HEK293 (cell line): ENCODE measurements at regions of chr17 and their contacts with region 1.

Region 1: DNA sequence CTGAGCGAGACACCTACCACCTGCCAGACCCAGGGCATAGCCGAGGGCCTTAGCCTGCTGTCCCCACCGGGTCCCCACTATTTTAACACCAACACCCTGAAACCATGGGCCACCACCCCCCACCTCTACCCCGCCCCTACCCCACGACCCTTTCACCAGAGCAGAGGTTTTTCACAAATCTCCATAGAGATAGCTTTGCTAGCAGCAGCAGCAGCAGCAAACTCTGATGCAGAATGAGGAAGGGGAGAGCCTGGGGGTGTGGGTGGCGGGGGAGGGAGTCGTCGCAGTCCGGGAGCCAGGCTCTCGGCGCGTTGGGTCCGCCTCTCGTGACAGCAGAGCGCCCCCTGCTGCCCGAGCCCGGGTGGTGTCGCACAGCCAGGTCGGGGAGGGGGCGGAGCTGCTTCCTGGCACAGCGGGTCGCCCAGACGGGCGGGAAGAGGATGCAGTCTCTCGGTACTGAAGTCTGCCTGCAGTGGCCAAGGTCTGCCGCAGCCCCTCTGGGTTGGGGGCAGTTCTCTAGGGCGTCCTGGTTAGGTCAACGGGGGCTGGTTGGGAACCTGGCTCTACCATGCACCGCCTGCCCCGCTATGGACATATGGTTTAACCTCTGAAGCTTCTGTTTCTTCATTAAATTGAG is 38.1 kb upstream of the CCDC182 start:
- H3K4me3 ChIP-seq: no peak overlapping the region
- H3K27ac ChIP-seq: no peak overlapping the region; the same call in 1 of the 2 replicates
- H3K4me1 ChIP-seq: peaks cover 3% of the 10 kb centered on the region; the same call in 1 of the 2 replicates
- CTCF ChIP-seq: peak; percentile 94

Region 2: GRCh38 chr17:57671667-57672632 is 111.3 kb before region 1 on chr17:
- CTCF ChIA-PET with region 1: interaction called, 18 read pairs
- POLR2A ChIA-PET with region 1: no interaction called
- H3K4me3 ChIP-seq: no peak overlapping the region
- H3K27ac ChIP-seq: no peak overlapping the region
- H3K4me1 ChIP-seq: peaks cover 8% of the 10 kb centered on the region
- CTCF ChIP-seq: peak; percentile 82

Region 3: DNA sequence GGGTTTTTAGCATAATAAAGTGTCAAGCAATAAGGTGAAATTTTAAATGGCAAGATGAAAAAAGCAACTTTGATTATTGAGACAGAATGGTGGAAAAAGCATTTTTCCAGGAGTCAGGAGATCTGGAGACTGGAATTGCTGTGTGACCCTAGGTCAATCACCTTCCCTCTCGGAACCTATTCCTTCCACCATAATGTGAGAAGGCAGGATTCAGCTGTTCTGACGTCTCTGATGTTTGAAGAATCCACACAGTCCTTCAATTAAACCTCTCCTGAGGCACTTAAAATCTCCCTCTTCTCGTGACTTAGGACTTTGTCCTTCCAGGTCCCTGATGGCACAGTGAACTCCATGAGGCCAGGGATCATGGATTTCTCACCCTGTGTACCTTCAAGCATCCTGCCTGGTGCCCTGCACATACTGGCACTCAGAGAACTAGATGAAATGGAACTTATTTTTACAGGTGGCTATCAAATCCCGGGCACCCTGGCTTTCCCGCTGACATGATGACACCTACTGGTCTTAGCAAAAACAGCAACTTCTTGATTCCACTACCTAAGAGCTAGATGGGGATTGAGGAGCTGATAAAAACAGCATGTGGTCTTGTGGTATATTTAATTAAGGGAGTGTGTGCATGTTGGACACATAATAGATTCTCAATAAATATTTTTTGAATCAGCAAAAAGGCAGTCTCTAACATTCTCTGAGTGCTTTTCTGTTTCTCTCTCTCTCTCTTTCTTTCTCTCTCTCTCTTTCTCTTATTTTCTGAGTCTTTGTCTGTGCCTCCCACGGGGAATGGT is 35.8 kb before region 1 on chr17:
- CTCF ChIA-PET with region 1: interaction called, 20 read pairs
- POLR2A ChIA-PET with region 1: no interaction called
- H3K4me3 ChIP-seq: no peak overlapping the region
- H3K27ac ChIP-seq: no peak overlapping the region
- H3K4me1 ChIP-seq: no peaks in the 10 kb centered on the region
- CTCF ChIP-seq: peak; percentile 55; the same call in 1 of the 2 replicates

Region 4: GRCh38 chr17:57794841-57795240 is 11.6 kb after region 1 on chr17:
- CTCF ChIA-PET with region 1: interaction called, 23 read pairs
- POLR2A ChIA-PET with region 1: no interaction called
- H3K4me3 ChIP-seq: no peak overlapping the region
- H3K27ac ChIP-seq: no peak overlapping the region
- H3K4me1 ChIP-seq: no peaks in the 10 kb centered on the region
- CTCF ChIP-seq: no peak

Region 5: DNA sequence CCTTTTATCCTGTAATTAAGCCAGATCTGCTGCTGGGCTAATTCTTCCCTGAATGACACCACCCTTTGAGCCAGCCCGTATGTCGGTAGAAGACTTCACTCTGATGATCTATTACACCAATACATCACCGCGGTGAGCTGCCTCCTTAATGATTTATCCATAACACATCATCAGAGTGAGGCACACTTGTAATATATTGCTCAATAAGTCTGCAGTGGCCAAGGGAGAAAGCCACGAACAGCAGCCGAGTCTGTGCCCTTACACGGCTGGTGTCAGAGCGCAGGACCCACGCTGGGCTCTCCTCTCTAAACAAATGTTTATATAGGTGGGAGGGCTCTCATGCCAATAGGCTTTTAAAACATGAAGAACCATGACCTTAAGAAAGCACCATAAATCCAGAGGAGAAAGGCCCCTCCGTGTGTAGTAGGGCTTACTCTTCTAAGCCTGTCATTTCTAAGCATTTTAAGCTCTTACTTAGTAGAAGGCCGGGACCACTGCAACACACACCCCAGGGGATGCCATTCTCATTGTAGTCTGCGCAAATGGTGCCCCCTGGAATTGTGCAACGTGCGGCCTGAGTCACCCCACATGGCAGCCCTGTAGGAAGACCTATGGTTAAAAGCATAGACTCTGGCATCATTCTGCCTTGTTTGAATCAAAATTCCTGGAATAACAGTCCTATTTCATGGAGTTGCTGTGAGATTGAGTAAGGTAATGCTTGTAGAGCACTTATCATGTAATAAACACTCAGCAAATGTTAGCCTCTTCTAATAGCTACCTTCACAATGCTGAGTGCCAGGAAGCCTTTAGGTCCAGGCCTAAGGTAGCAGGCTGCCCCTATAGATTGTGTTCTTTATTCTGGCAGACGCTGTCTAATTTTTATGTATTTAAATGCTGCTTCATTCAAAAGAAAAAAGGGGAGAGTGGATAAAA is 40.5 kb after region 1 on chr17:
- CTCF ChIA-PET with region 1: interaction called, 15 read pairs
- POLR2A ChIA-PET with region 1: no interaction called
- H3K4me3 ChIP-seq: no peak overlapping the region
- H3K27ac ChIP-seq: no peak overlapping the region
- H3K4me1 ChIP-seq: no peaks in the 10 kb centered on the region
- CTCF ChIP-seq: no peak

Region 6: GRCh38 chr17:58020401-58020800 is 237.2 kb after region 1 on chr17:
- CTCF ChIA-PET with region 1: no interaction called
- POLR2A ChIA-PET with region 1: no interaction called
- H3K4me3 ChIP-seq: no peak overlapping the region
- H3K27ac ChIP-seq: no peak overlapping the region
- H3K4me1 ChIP-seq: peaks cover 15% of the 10 kb centered on the region
- CTCF ChIP-seq: no peak